Caco-2 (cell line): ENCODE measurements at regions of chr9 and their contacts with region 1.

Region 1: DNA sequence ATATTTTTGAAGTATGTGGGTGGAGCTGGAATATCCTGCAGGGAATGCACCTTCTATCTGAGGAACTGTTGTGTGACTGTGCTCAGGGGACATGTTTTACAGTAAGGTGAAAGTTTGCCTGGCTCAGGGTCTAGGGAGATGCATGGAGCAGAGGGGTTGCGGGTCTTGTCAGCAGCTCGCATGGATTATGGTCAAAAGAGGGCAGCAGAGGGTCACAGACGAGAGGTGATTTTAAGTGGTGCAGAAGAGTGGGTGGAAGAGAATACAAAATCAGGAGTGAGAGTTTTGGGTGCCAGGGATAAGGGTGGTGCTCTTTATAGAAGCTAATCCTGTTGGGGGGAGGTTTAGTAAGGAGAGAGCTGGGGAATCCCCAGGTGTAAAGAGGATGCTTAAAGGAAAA is 53.5 kb upstream of the GRIN3A start:
- DNase-seq: peak; percentile 55 to 73
- H3K4me3 ChIP-seq: no peak overlapping the region
- H3K4me3 Mint-ChIP-seq: no peak overlapping the region
- H3K27ac Mint-ChIP-seq: no peak overlapping the region
- H3K4me1 ChIP-seq: no peaks in the 10 kb centered on the region
- H3K4me1 Mint-ChIP-seq: no peaks in the 10 kb centered on the region
- H3K27me3 ChIP-seq: no peaks in the 10 kb centered on the region
- H3K27me3 Mint-ChIP-seq: no peaks in the 10 kb centered on the region
- CTCF ChIP-seq: peak; percentile 64 to 68

Region 2: GRCh38 chr9:101536938-101537337 is 255.0 kb before region 1 on chr9:
- CTCF ChIA-PET with region 1: no interaction called
- POLR2A ChIA-PET with region 1: no interaction called
- intact Hi-C with region 1: no loop called
- DNase-seq: peak in 1 of 2 experiments; percentile 41
- H3K4me3 ChIP-seq: no peak overlapping the region
- H3K4me3 Mint-ChIP-seq: no peak overlapping the region
- H3K27ac Mint-ChIP-seq: no peak overlapping the region
- H3K4me1 ChIP-seq: no peaks in the 10 kb centered on the region
- H3K4me1 Mint-ChIP-seq: no peaks in the 10 kb centered on the region
- H3K27me3 ChIP-seq: no peaks in the 10 kb centered on the region
- H3K27me3 Mint-ChIP-seq: no peaks in the 10 kb centered on the region
- CTCF ChIP-seq: no peak

Region 3: DNA sequence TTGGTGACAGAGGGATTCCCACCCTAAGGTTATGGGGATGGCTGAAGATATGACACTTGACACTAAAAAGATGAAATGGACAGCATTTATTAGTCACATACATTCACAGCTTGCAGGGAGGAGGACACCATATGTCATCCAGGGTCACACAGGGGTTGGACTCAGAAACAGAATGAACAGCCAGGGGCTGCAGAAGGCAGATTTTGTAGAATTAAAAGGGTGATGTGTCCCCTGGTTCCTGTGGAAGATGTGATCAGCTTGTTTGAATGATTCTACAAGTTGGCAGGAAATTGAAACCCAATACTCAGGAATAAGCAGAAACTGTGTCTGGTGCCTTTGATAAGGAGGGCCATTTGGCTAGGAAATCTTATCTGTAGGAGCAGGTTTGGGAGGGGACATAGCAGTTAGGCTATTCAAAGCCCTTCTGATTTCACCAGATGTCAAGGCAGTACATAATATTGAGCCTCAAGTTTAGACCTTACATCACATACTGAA is 48.8 kb after region 1 on chr9:
- CTCF ChIA-PET with region 1: no interaction called
- POLR2A ChIA-PET with region 1: no interaction called
- intact Hi-C with region 1: loop called (anchors 5 kb)
- DNase-seq: no peak
- H3K4me3 ChIP-seq: no peak overlapping the region
- H3K4me3 Mint-ChIP-seq: no peak overlapping the region
- H3K27ac Mint-ChIP-seq: no peak overlapping the region
- H3K4me1 ChIP-seq: no peaks in the 10 kb centered on the region
- H3K4me1 Mint-ChIP-seq: no peaks in the 10 kb centered on the region
- H3K27me3 ChIP-seq: no peaks in the 10 kb centered on the region
- H3K27me3 Mint-ChIP-seq: peaks cover 3% of the 10 kb centered on the region
- CTCF ChIP-seq: no peak

Region 4: GRCh38 chr9:101966691-101967090 is 174.8 kb after region 1 on chr9:
- CTCF ChIA-PET with region 1: no interaction called
- POLR2A ChIA-PET with region 1: no interaction called
- intact Hi-C with region 1: loop called (anchors 1 kb)
- DNase-seq: no peak
- H3K4me3 ChIP-seq: no peak overlapping the region
- H3K4me3 Mint-ChIP-seq: no peak overlapping the region
- H3K27ac Mint-ChIP-seq: no peak overlapping the region
- H3K4me1 ChIP-seq: no peaks in the 10 kb centered on the region
- H3K4me1 Mint-ChIP-seq: no peaks in the 10 kb centered on the region
- H3K27me3 ChIP-seq: no peaks in the 10 kb centered on the region; the same call in 1 of the 2 replicates
- H3K27me3 Mint-ChIP-seq: no peaks in the 10 kb centered on the region
- CTCF ChIP-seq: no peak

Region 5: GRCh38 chr9:102069969-102070368 is 278.0 kb after region 1 on chr9:
- CTCF ChIA-PET with region 1: no interaction called
- POLR2A ChIA-PET with region 1: no interaction called
- intact Hi-C with region 1: no loop called
- DNase-seq: no peak
- H3K4me3 ChIP-seq: no peak overlapping the region
- H3K4me3 Mint-ChIP-seq: no peak overlapping the region
- H3K27ac Mint-ChIP-seq: no peak overlapping the region
- H3K4me1 ChIP-seq: no peaks in the 10 kb centered on the region; the same call in 1 of the 2 replicates
- H3K4me1 Mint-ChIP-seq: peaks cover 8% of the 10 kb centered on the region
- H3K27me3 ChIP-seq: no peaks in the 10 kb centered on the region
- H3K27me3 Mint-ChIP-seq: no peaks in the 10 kb centered on the region
- CTCF ChIP-seq: no peak

Region 6: DNA sequence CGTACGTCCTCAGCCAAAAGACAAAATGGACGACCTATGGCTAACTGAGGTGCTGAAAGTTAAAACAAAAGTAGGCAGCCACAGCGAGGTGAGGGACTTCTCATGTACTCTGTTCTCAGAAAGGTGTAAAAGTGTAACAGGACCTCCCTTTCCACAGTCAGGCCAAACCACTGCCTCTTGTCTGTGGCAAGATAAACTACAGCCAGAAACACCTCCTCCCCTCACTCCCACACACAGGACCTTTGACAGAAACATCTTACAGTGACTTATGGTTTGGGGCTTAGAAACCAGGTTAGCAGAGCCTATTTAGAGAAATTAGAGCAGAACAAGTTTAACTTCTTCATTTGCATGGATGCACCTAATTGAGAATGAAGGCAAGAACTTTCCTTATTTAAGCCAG is 445.6 kb after region 1 on chr9:
- CTCF ChIA-PET with region 1: no interaction called
- POLR2A ChIA-PET with region 1: no interaction called
- intact Hi-C with region 1: loop called (anchors 10 kb)
- DNase-seq: no peak
- H3K4me3 ChIP-seq: no peak overlapping the region
- H3K4me3 Mint-ChIP-seq: no peak overlapping the region
- H3K27ac Mint-ChIP-seq: no peak overlapping the region
- H3K4me1 ChIP-seq: no peaks in the 10 kb centered on the region
- H3K4me1 Mint-ChIP-seq: no peaks in the 10 kb centered on the region
- H3K27me3 ChIP-seq: no peaks in the 10 kb centered on the region
- H3K27me3 Mint-ChIP-seq: no peaks in the 10 kb centered on the region
- CTCF ChIP-seq: no peak